ENCODE measurements at regions of chr15 and their contacts with region 1.

Region 1: DNA sequence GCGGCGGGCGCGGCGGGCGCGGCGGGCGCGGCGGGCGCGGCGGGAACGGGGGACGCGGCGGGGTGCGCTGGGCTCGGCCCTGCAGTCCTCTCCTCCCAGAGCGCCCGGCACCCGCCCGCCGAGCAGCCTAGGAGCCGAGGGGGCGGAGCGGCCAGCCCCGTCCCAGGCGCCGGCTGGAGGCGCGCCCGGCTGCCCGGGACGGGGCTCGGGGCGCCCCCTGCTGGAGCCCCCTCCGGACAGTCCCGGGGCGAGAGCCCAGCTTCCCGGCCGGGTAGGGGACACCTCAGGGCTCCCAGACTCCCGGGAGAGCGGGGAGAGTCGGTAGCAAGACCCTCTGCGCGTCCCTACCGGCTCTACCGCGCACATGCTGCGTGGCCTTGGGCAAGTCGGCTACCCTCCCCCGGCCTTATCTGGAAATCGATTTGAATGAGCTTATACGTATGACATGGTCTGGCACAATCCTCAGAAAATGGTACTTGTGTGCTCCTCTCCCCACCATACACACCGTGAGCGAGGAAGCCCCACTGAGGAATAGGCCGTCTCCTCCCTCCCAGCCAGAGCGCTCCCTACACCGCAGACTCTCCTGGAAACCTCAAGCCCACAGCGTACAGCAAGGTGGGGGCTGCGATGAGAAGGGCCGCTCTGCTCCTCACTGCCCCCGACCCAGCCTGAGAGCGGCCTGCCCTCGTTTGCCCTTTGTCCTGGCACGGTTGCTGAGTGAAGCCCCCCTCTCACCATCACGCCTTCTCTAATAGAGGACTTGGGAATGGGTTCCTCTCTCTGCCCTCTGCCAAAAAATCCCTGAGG is at the start of gene DAPK2:
- H3K4me3 Mint-ChIP-seq: peak within 1 kb of the TSS; percentile 54
- H3K27ac Mint-ChIP-seq: no peak within 1 kb of the TSS
- H3K4me1 Mint-ChIP-seq: peaks cover 72% of the 10 kb centered on the region
- H3K27me3 Mint-ChIP-seq: peaks cover 73% of the 10 kb centered on the region

Region 2: GRCh38 chr15:63945007-63945788 is 101.4 kb before region 1 on chr15:
- intact Hi-C with region 1: loop called (anchors 10 kb)
- H3K4me3 Mint-ChIP-seq: no peak overlapping the region
- H3K27ac Mint-ChIP-seq: no peak overlapping the region
- H3K4me1 Mint-ChIP-seq: peaks cover 17% of the 10 kb centered on the region
- H3K27me3 Mint-ChIP-seq: peaks cover 17% of the 10 kb centered on the region

Region 3: GRCh38 chr15:63986751-63987341 is 59.7 kb before region 1 on chr15:
- intact Hi-C with region 1: loop called (anchors 5 kb)
- H3K4me3 Mint-ChIP-seq: peak overlapping the region; percentile 13
- H3K27ac Mint-ChIP-seq: peak overlapping the region; percentile 83
- H3K4me1 Mint-ChIP-seq: peaks cover 78% of the 10 kb centered on the region
- H3K27me3 Mint-ChIP-seq: no peaks in the 10 kb centered on the region

Region 4: GRCh38 chr15:63997715-63998442 is 48.7 kb before region 1 on chr15:
- intact Hi-C with region 1: no loop called
- H3K4me3 Mint-ChIP-seq: no peak overlapping the region
- H3K27ac Mint-ChIP-seq: no peak overlapping the region
- H3K4me1 Mint-ChIP-seq: peaks cover 33% of the 10 kb centered on the region
- H3K27me3 Mint-ChIP-seq: peaks cover 14% of the 10 kb centered on the region

Region 5: GRCh38 chr15:64144565-64145281 is 98.2 kb after region 1 on chr15:
- intact Hi-C with region 1: no loop called
- H3K4me3 Mint-ChIP-seq: no peak overlapping the region
- H3K27ac Mint-ChIP-seq: no peak overlapping the region
- H3K4me1 Mint-ChIP-seq: peaks cover 35% of the 10 kb centered on the region
- H3K27me3 Mint-ChIP-seq: no peaks in the 10 kb centered on the region

Measured in dendritic cell treated with granulocyte-macrophage colony-stimulating factor and Interleukin-4, amounts not matched to agents 40 ng/mL and 50 ng/mL, for 4 days (primary cell).